ENCODE measurements at regions of chr3 and their contacts with region 1.

Region 1: GRCh38 chr3:15647611-15648167 is 46.1 kb downstream of the BTD start:
- DNase-seq: no peak
- ATAC-seq: peak; percentile 32
- H3K4me3 ChIP-seq: no peak overlapping the region
- H3K27ac ChIP-seq: peak overlapping the region in 1 of 2 donors; percentile 26
- H3K4me1 ChIP-seq: no peaks in the 10 kb centered on the region
- H3K27me3 ChIP-seq: no peaks in the 10 kb centered on the region

Region 2: GRCh38 chr3:15805756-15806266 is 158.1 kb after region 1 on chr3:
- intact Hi-C with region 1: loop called in 1 of 2 experiments (anchors 5 kb)
- DNase-seq: no peak
- ATAC-seq: no peak
- H3K4me3 ChIP-seq: no peak overlapping the region
- H3K27ac ChIP-seq: no peak overlapping the region
- H3K4me1 ChIP-seq: peaks cover 0 to 5% of the 10 kb centered on the region in 2 donors
- H3K27me3 ChIP-seq: no peaks in the 10 kb centered on the region

Region 3: DNA sequence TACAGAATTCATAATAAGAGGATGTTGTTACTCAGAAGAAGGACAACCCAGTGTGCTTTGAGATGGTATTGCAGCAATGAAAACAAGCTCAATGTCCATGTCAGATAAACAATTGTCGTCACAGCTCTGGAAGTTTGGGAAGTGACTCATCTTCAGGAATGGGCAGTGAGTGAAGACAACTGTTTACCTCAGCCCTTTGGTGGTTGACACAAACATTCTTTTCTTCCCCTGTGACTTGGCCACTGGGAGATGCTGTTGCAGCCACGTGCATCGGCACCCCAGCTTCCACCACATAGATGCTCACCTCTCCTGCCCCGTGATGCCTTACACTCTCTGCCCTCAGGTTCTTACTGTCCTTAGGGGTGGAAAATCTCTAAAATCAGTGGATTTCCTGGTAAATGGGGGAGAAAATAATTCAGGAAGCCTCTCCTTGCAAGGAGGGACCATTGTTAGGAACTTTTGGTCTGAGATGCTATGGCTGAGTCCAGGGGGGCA is 412.7 kb after region 1 on chr3:
- intact Hi-C with region 1: no loop called
- DNase-seq: no peak
- ATAC-seq: peak; percentile 72
- H3K4me3 ChIP-seq: no peak overlapping the region
- H3K27ac ChIP-seq: peak overlapping the region in 1 of 2 donors; percentile 11
- H3K4me1 ChIP-seq: peaks cover 5% of the 10 kb centered on the region in 2 donors
- H3K27me3 ChIP-seq: no peaks in the 10 kb centered on the region

Measured in aorta (tissue), 5 donors.